Ascending aorta (tissue), 2 donors: ENCODE measurements at regions of chr9 and their contacts with region 1.

Region 1: GRCh38 chr9:128127990-128128835 is 684 bp upstream of the PTGES2 start:
- DNase-seq: peak; percentile 27 to 87
- H3K4me3 ChIP-seq: peak overlapping the region; percentile 95 to 100
- H3K27ac ChIP-seq: peak overlapping the region; percentile 95
- H3K4me1 ChIP-seq: peaks cover 4 to 19% of the 10 kb centered on the region in 2 donors
- H3K27me3 ChIP-seq: no peaks in the 10 kb centered on the region
- CTCF ChIP-seq: no peak

Region 2: DNA sequence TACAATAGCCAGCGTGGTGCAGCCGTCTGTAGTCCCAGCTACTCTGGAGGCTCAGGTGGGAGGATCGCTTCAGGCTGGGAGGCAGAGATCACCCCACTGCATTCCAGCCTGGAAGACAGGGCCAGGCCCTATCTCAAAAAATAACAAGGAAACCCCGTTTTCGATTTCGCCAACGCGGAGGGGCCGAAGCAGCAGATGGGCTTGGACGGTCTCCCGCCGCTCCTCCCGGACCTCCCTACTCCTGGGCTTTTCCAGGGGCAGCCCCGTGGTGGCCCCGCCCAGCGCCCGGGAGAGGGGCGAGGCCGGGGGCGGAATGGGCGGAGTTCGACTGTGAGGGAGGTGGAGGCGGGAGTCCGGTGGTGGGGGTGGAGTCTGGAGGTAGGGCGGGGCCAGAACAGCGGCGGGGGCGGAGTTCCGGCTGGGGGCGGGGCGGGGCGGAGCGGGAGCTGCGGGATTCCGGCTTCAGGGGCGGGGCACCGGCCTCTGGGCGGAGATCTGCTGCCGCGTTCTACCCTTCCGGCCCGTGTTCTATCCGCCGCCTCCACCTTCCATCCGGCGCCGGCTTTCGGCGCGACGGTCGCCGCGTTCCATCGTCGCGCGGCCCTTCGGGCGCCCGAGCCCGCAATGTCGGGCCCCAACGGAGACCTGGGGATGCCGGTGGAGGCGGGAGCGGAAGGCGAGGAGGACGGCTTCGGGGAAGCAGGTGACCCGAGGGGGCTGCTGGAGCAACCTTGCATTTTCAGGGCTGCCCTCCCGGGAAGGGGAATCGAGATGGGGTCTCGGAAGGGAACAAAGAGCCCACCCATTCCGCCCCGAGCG is 31.8 kb after region 1 on chr9 and contains the start of gene BBLN:
- intact Hi-C with region 1: loop called (anchors 1 kb)
- DNase-seq: peak; percentile 63 to 97
- H3K4me3 ChIP-seq: peak within 1 kb of the TSS; percentile 59 to 90
- H3K27ac ChIP-seq: peak within 1 kb of the TSS; percentile 59 to 66
- H3K4me1 ChIP-seq: peaks cover 0 to 18% of the 10 kb centered on the region in 2 donors
- H3K27me3 ChIP-seq: no peaks in the 10 kb centered on the region
- CTCF ChIP-seq: no peak
- total RNA-seq, gene BBLN: 389 TPM

Region 3: GRCh38 chr9:128175102-128175563 is 46.9 kb after region 1 on chr9:
- intact Hi-C with region 1: no loop called
- DNase-seq: no peak
- H3K4me3 ChIP-seq: no peak overlapping the region
- H3K27ac ChIP-seq: no peak overlapping the region
- H3K4me1 ChIP-seq: no peaks in the 10 kb centered on the region
- H3K27me3 ChIP-seq: no peaks in the 10 kb centered on the region
- CTCF ChIP-seq: no peak

Region 4: DNA sequence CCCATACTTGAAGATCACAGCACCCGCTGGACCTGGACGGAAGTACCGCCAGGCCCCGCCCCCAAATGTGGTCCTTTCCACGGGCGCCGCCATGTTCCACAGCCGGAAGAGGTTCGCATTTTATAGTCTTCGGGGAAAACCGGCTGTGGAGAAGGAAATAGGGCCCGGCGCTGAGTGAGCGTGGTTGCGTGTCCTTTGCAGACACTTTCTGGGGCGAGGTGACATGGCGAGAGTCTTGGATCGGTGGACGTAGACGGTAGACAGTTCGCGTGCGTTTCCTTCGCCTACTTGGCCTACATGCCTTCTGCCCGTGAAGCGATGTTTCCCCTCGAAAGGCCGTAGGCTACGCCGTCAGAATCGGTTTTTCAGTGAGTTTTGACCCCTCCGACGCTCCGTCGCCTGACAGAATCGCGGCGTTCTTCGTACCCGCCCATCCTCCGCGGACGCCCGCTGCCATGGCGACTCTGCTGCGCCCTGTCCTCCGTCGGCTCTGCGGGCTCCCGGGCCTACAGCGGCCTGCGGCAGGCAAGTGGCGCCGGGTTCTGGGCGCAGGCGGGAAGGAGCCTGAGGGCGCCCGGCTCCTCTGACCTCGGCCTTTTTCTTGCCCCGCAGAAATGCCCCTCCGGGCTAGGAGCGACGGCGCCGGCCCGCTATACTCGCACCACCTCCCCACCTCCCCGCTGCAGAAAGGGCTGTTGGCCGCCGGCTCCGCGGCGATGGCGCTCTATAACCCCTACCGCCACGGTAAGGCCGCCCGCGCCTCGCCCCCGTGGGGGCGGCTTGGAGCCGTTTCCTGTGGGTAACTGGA is 194.4 kb after region 1 on chr9 and contains the starts of genes COQ4 and TRUB2:
- intact Hi-C with region 1: loop called (anchors 5 kb)
- DNase-seq: peak; percentile 72 to 97
- H3K4me3 ChIP-seq: peak within 1 kb of the TSS; percentile 72 to 76
- H3K27ac ChIP-seq: peak within 1 kb of the TSS; percentile 82 to 85
- H3K4me1 ChIP-seq: peaks cover 11 to 17% of the 10 kb centered on the region in 2 donors
- H3K27me3 ChIP-seq: no peaks in the 10 kb centered on the region
- CTCF ChIP-seq: no peak
- total RNA-seq, gene COQ4: 11.4 TPM
- total RNA-seq, gene TRUB2: 10.2 TPM